Lower leg skin (tissue), 4 donors: ENCODE measurements at regions of chr2 and their contacts with region 1.

Region 1: GRCh38 chr2:174835797-174836255 is 71.6 kb upstream of the CHRNA1 start:
- DNase-seq: no peak
- H3K4me3 ChIP-seq: no peak overlapping the region
- CTCF ChIP-seq: no peak
- POLR2A ChIP-seq: no peak

Region 2: DNA sequence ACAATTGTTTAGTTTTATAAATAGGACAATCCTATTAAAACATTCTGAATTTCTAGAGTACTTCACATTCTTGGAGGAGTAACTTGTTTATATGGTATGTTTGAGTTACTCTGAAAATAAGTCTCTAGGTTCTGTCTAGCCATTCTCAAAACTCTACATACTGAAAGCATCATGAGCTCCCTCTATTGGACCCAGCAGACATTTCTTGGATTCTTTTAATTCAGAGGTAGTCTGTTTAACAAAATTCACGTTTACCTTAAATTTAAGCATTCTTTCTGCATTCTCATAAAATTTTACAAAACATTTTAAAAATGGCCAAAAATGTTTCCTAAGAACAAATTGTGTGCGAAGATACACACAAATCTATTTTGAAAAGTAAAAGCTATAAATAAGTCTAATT is 485.8 kb before region 1 on chr2:
- intact Hi-C with region 1: loop called (anchors 5 kb)
- DNase-seq: no peak
- H3K4me3 ChIP-seq: no peak overlapping the region
- CTCF ChIP-seq: no peak
- POLR2A ChIP-seq: no peak